ENCODE measurements at regions of chr22 and their contacts with region 1.

Region 1: DNA sequence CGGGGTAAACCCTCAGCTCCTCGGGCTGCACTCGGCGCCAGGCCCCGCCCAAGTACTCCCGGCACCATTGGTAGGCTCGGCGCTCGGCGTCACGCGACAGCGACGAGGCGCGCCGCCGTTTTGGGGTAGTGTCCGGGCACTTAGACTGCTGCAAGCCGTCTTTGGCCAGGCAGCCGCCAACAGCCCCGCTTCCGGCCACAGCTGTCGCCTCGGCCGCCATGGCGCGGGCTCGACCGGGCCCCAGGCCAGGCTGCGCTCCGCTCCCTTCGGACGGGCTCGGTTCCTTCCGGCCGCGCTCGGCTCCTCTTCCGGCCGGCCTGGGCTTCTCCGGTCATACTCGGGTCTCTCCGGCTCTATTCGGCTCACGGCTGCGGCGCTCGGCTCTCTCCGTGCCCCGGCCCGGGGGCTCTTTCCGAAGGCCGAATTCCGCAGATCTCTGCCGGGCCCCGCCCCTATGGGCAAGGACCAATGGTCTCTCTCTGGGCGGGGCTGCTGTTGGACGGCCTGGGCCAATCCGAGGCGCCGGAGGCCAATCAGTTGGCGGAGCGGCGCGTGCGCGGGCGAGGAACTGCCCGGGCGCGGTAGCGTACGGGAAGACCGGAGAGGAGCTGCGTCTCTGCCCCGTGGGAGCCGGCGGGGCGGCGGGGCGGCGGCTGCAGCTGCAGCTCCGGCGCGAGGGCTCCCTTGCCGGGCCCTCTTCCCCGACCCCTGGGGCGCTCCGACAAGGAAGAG is at the start of gene CHKB:
- DNase-seq: peak; percentile 98
- H3K4me3 Mint-ChIP-seq: peak within 1 kb of the TSS; percentile 94
- H3K27ac Mint-ChIP-seq: peak within 1 kb of the TSS; percentile 93
- H3K4me1 Mint-ChIP-seq: no peaks in the 10 kb centered on the region
- H3K27me3 Mint-ChIP-seq: no peaks in the 10 kb centered on the region
- CTCF ChIP-seq: no peak
- total RNA-seq, gene CHKB: 51.4 and 60.6 TPM in 2 replicates

Region 2: DNA sequence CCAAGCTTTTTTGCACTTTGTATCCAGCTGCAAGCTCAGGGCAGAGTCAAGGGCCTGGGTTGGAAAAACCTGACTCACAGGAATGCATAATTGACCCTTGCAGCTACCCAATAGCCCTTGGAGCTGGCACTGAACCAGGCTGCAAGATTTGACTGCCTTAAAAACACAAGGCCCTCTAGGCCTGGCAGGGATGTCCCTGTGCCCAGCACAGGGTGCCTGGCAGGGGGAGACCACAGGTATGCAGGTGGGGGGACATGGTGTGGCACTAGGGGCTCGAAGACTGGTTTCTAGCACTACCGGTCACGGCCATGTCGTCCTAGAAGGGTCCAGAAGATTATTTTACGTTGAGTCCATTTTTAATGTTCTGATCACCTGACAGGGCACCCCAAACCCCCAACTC is 138.1 kb before region 1 on chr22:
- CTCF ChIA-PET with region 1: no interaction called
- POLR2A ChIA-PET with region 1: no interaction called
- intact Hi-C with region 1: no loop called
- DNase-seq: peak; percentile 37
- H3K4me3 Mint-ChIP-seq: no peak overlapping the region
- H3K27ac Mint-ChIP-seq: no peak overlapping the region
- H3K4me1 Mint-ChIP-seq: no peaks in the 10 kb centered on the region
- H3K27me3 Mint-ChIP-seq: no peaks in the 10 kb centered on the region
- CTCF ChIP-seq: no peak

Region 3: DNA sequence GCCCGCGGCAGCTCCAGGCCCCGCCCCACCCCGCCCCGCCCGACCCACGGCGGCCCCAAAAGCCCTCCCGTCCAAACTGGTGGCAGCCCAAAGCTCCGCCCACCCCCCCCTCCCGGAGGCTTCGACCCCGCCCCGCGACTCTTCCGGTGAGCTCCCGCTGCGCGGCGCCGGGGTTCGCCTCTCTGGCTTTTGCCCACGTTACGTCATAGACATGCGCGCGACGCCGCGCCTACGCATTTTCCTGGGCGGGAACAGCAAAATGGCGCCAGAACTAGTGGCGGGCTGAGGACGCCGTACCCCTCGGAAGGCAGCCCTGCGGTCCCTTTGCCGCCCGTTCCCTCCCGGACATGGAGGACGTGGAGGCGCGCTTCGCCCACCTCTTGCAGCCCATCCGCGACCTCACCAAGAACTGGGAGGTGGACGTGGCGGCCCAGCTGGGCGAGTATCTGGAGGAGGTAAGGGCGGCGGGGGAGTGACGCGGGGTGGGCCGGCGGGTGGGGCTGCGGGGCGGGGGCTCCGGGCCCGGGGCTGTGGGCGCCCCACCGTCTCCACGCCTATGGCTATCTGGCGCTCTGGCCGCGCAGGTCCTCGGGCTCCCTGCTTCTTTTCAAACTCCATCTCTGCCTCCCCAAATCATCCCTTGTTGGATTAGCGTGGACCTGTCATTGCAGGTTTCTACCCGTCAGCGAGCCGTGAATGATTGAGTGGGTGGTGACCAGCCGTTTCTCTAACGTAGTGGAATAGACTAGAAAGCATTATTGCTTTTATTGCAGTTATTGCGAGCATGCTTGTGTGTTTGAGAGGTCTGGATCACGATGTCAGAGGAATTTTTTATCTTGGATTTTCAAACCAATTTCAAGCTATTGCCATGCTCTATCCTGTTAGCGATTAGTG is 74.5 kb before region 1 on chr22 and contains the start of gene NCAPH2:
- CTCF ChIA-PET with region 1: no interaction called
- POLR2A ChIA-PET with region 1: interaction called, 21 read pairs
- intact Hi-C with region 1: no loop called
- DNase-seq: peak; percentile 96
- H3K4me3 Mint-ChIP-seq: peak within 1 kb of the TSS; percentile 92
- H3K27ac Mint-ChIP-seq: peak within 1 kb of the TSS; percentile 93
- H3K4me1 Mint-ChIP-seq: peaks cover 12% of the 10 kb centered on the region
- H3K27me3 Mint-ChIP-seq: no peaks in the 10 kb centered on the region
- CTCF ChIP-seq: no peak
- total RNA-seq, gene NCAPH2: 31.6 and 39.8 TPM in 2 replicates

Region 4: GRCh38 chr22:50525390-50526068 is 57.2 kb before region 1 on chr22 and contains the start of gene SCO2:
- CTCF ChIA-PET with region 1: no interaction called
- POLR2A ChIA-PET with region 1: interaction called, 38 read pairs
- intact Hi-C with region 1: loop called (anchors 5 kb)
- DNase-seq: peak; percentile 96
- H3K4me3 Mint-ChIP-seq: peak within 1 kb of the TSS; percentile 85
- H3K27ac Mint-ChIP-seq: peak within 1 kb of the TSS; percentile 88
- H3K4me1 Mint-ChIP-seq: peaks cover 20% of the 10 kb centered on the region
- H3K27me3 Mint-ChIP-seq: no peaks in the 10 kb centered on the region
- CTCF ChIP-seq: peak; percentile 49
- total RNA-seq, gene SCO2: 2.4 and 5.4 TPM in 2 replicates

Region 5: DNA sequence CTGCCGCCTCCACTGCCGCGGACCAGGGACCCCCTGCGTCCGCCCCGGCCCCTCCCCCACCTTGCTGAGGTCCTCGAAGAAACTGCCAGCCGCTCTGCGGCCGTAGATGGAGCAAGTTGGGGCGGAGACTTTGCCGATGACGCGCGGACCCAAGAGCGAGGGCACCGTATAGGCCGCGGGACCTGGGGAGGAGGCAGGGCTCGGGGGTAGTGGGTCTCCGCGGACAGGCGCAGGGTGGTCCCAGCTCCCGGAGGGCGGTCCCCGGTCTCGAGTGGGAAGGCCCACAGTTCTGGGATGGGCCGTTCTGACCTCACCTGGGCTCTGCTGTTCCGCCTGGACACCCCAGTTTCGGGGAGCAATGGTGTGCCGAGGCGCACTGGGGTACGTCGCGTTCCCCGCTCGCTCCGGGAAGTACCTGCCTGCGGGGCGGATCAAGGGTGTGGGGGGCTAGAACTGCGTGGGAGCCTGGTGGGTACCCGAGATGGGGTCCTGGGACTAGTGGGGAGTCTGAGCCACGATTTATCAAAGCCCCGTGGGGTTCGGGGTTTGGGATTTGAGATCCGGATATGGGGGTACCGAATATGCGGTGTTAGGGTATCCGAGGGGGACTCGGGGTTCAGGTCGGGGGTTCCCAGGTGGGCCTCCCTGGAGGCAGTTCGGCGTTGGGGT is 51.7 kb before region 1 on chr22:
- CTCF ChIA-PET with region 1: interaction called, 3 read pairs
- POLR2A ChIA-PET with region 1: interaction called, 38 read pairs
- intact Hi-C with region 1: loop called (anchors 5 kb)
- DNase-seq: peak; percentile 94
- H3K4me3 Mint-ChIP-seq: peak overlapping the region; percentile 85
- H3K27ac Mint-ChIP-seq: peak overlapping the region; percentile 97
- H3K4me1 Mint-ChIP-seq: peaks cover 22% of the 10 kb centered on the region
- H3K27me3 Mint-ChIP-seq: no peaks in the 10 kb centered on the region
- CTCF ChIP-seq: no peak

Region 6: GRCh38 chr22:50544078-50544745 is 38.5 kb before region 1 on chr22:
- CTCF ChIA-PET with region 1: interaction called, 3 read pairs
- POLR2A ChIA-PET with region 1: interaction called, 51 read pairs
- intact Hi-C with region 1: no loop called
- DNase-seq: peak; percentile 18
- H3K4me3 Mint-ChIP-seq: peak overlapping the region; percentile 36
- H3K27ac Mint-ChIP-seq: peak overlapping the region; percentile 28
- H3K4me1 Mint-ChIP-seq: peaks cover 31% of the 10 kb centered on the region
- H3K27me3 Mint-ChIP-seq: no peaks in the 10 kb centered on the region
- CTCF ChIP-seq: peak; percentile 26

Region 7: GRCh38 chr22:50641696-50642607 is 59.2 kb after region 1 on chr22:
- CTCF ChIA-PET with region 1: no interaction called
- POLR2A ChIA-PET with region 1: no interaction called
- intact Hi-C with region 1: no loop called
- DNase-seq: no peak
- H3K4me3 Mint-ChIP-seq: no peak overlapping the region
- H3K27ac Mint-ChIP-seq: no peak overlapping the region
- H3K4me1 Mint-ChIP-seq: no peaks in the 10 kb centered on the region
- H3K27me3 Mint-ChIP-seq: no peaks in the 10 kb centered on the region
- CTCF ChIP-seq: no peak

Region 8: GRCh38 chr22:50691521-50691920 is 108.8 kb after region 1 on chr22:
- CTCF ChIA-PET with region 1: no interaction called
- POLR2A ChIA-PET with region 1: interaction called, 3 read pairs
- intact Hi-C with region 1: loop called (anchors 2 kb)
- DNase-seq: peak; percentile 60
- H3K4me3 Mint-ChIP-seq: no peak overlapping the region
- H3K27ac Mint-ChIP-seq: no peak overlapping the region
- H3K4me1 Mint-ChIP-seq: peaks cover 6% of the 10 kb centered on the region
- H3K27me3 Mint-ChIP-seq: no peaks in the 10 kb centered on the region
- CTCF ChIP-seq: peak; percentile 67

Measured in MCF 10A (cell line).